Right cardiac atrium (tissue), 5 donors: ENCODE measurements at regions of chr17 and their contacts with region 1.

Region 1: DNA sequence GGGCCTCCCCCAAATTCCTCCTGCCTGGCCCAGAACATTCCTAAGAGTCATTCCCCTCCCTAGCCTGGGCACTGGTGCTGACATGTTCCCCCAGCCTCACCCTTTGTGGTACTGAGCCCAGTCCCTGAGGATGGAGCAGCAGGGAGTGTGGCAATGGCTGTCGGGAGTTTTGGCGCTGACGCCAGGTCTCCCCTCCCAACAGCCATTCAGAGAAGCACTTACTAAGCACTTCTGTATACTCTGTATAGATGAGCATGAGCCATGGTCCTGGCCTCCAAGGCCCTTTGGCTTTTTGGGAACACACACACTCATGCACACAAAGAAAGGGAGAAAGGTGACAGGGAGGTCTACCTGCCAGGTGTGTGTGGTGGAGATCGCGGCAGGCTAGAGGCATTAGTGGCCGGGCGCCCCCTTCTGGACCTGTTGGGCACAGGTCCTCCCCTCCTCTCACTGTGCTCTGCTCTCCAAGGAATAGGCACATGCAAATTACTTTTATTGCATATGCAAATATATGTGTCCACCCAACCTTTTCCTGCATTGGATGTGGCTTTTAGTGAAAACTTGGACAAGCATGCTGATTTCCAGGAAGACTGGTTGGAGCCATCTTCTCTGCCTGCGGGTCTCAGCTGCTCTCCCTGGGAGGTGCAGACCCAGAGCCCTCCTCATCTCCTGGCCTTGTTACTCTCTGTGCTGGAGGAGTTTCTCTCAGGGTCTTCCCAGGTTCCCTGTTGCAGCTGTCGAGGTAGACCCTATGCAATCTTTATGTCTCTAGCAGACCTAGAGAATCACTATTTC is 17.4 kb upstream of the C17orf107 start:
- DNase-seq: peak; percentile 65 to 81 (median 74)
- ATAC-seq: peak; percentile 60 to 72
- H3K4me3 ChIP-seq: no peak overlapping the region
- H3K27ac ChIP-seq: no peak overlapping the region
- H3K4me1 ChIP-seq: no peaks in the 10 kb centered on the region
- H3K27me3 ChIP-seq: no peaks in the 10 kb centered on the region

Region 2: DNA sequence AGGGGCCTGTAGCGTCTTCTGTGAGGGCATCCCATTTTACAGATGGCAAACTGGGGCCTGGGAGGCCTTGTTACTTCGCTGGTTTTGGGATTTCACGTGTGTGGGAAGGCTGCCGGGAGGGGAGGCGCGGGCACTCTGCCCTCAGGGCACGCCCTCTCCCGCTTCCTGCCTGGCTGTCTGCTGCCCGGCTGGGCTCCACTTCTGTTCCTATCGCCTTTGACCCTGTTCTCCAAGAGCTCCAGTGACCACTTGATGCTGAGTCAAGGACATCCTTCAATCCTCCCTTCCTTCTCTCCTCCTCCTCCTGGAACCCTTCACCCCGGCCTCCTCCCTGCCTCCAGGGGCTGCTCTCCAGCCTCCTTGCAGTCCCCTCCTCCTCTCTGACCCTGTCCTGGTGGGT is 432.2 kb before region 1 on chr17:
- intact Hi-C with region 1: no loop called
- DNase-seq: peak in 1 of 3 donors; percentile 60
- ATAC-seq: peak; percentile 20 to 54
- H3K4me3 ChIP-seq: no peak overlapping the region
- H3K27ac ChIP-seq: no peak overlapping the region
- H3K4me1 ChIP-seq: peaks cover 2% of the 10 kb centered on the region
- H3K27me3 ChIP-seq: no peaks in the 10 kb centered on the region

Region 3: DNA sequence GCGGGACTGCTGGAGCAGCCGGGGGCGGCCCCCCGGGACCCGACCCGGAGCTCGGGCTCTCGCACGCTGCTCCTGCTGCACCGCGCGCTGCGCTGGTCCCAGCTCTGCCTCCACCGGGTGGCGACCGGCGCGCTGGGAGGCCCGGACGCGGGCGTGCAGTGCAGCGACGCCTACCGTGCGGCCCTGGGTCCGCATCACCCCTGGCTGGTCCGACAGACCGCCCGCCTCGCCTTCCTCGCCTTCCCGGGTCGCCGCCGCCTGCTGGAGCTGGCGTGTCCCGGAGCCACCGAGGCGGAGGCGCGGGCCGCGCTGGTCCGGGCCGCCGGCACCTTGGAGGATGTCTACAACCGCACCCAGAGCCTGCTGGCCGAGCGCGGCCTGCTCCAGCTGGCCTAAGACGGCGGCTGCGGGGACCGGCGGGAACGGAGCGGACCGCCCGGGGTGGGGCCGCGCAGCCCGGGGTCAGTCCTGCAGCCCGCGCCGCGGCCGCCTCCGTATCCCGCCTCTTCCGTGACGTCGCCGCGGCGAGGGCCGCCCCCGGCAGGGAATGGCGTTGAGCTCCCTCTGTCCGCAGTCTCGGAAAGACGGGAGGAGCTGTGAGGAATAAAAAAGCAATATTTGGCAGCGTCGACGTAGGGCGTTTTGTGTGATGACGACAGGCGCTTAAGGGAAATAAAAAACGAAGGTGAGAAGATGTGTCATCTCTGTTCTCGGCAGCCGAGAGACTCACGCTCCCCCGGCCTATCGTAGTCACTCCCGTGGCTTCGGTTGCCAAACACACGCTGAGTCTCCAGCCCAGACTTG is 91.9 kb before region 1 on chr17:
- intact Hi-C with region 1: loop called in 3 of 4 experiments (anchors 5 to 10 kb)
- DNase-seq: peak; percentile 85 to 95 (median 94)
- ATAC-seq: peak; percentile 95 to 96
- H3K4me3 ChIP-seq: peak overlapping the region; percentile 59
- H3K27ac ChIP-seq: peak overlapping the region; percentile 85
- H3K4me1 ChIP-seq: no peaks in the 10 kb centered on the region
- H3K27me3 ChIP-seq: no peaks in the 10 kb centered on the region

Region 4: GRCh38 chr17:4833178-4833940 is 48.6 kb before region 1 on chr17 and contains the start of gene MINK1:
- intact Hi-C with region 1: loop called in 1 of 4 experiments (anchors 10 kb)
- DNase-seq: peak; percentile 91 to 97 (median 96)
- ATAC-seq: peak; percentile 97 to 98
- H3K4me3 ChIP-seq: peak within 1 kb of the TSS; percentile 44
- H3K27ac ChIP-seq: peak within 1 kb of the TSS; percentile 63
- H3K4me1 ChIP-seq: peaks cover 10% of the 10 kb centered on the region
- H3K27me3 ChIP-seq: no peaks in the 10 kb centered on the region
- total RNA-seq, gene MINK1: 44.5 to 54.7 (median 49.3) TPM

Region 5: GRCh38 chr17:5078106-5079028 is 196.4 kb after region 1 on chr17 and contains the start of gene ZFP3:
- intact Hi-C with region 1: no loop called
- DNase-seq: peak; percentile 91 to 95 (median 95)
- ATAC-seq: peak; percentile 97
- H3K4me3 ChIP-seq: peak within 1 kb of the TSS; percentile 85
- H3K27ac ChIP-seq: peak within 1 kb of the TSS; percentile 91
- H3K4me1 ChIP-seq: peaks cover 2% of the 10 kb centered on the region
- H3K27me3 ChIP-seq: no peaks in the 10 kb centered on the region
- total RNA-seq, gene ZFP3: 11.7 to 14.2 (median 12.0) TPM